Activated T-helper 1 cell treated with anti-CD3 and anti-CD28 coated beads, Interleukin-12 subunit alpha, Interleukin-12 subunit beta, Interleukin-2, Interleukin-4 antibody, amounts not matched to agents 30 ng/mL and 10 ng/mL and 1 ng/mL, durations not matched to agents 14 hours and 24 hours and 36 hours (primary cell): ENCODE measurements at regions of chr5 and their contacts with region 1.

Region 1: GRCh38 chr5:35926389-35927051 is 11.9 kb downstream of the CAPSL start:
- DNase-seq: peak; percentile 57
- H3K4me3 Mint-ChIP-seq: no peak overlapping the region
- H3K27ac Mint-ChIP-seq: no peak overlapping the region
- H3K4me1 Mint-ChIP-seq: peaks cover 38% of the 10 kb centered on the region
- H3K27me3 Mint-ChIP-seq: peaks cover 3% of the 10 kb centered on the region

Region 2: GRCh38 chr5:34957857-34958690 is 968.4 kb before region 1 on chr5:
- intact Hi-C with region 1: loop called (anchors 1 kb)
- DNase-seq: no peak
- H3K4me3 Mint-ChIP-seq: no peak overlapping the region
- H3K27ac Mint-ChIP-seq: no peak overlapping the region
- H3K4me1 Mint-ChIP-seq: peaks cover 27% of the 10 kb centered on the region
- H3K27me3 Mint-ChIP-seq: no peaks in the 10 kb centered on the region

Region 3: DNA sequence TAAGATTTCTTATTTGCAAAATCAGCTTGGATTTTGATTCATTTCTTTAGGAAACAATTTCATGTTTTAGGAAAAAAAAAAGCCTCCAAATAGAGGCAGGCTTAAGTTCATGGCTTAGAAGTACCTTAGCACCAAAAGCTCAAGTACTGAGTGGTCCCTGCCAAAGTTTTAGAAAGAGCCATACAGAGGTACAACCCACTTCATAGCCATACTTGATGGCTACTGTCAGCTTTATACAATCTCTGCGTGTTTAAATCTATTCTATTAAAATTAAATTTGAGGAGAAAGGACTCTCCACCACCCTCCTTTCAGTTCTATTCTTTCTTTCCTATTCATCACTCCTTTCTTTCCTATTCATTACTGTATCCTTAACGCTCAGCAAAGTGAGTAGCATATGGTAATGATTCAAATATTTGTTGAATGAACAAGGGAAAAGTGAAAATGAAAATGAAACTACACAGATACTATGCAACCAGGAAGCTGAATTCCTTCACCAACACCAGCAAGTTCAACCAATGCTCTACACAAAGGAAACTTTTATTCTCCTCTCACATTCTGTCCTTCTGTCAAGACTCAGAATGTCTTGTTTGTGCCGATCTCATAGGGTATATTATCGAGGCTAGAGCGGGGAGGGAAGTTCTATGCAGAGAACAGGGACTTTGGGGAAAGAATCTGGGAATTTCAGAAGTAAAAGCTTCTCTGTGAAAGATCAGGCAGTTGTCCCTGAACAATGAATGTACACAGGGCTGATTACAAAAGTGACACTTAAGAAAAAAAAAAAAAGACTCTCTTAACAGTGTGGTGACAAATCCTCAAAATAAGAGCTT is 447.5 kb before region 1 on chr5:
- intact Hi-C with region 1: loop called (anchors 5 kb)
- DNase-seq: peak; percentile 1
- H3K4me3 Mint-ChIP-seq: peak overlapping the region; percentile 66
- H3K27ac Mint-ChIP-seq: peak overlapping the region; percentile 86
- H3K4me1 Mint-ChIP-seq: peaks cover 12% of the 10 kb centered on the region
- H3K27me3 Mint-ChIP-seq: no peaks in the 10 kb centered on the region

Region 4: GRCh38 chr5:35651002-35651756 is 275.3 kb before region 1 on chr5:
- intact Hi-C with region 1: loop called (anchors 1 kb)
- DNase-seq: peak; percentile 50
- H3K4me3 Mint-ChIP-seq: no peak overlapping the region
- H3K27ac Mint-ChIP-seq: no peak overlapping the region
- H3K4me1 Mint-ChIP-seq: peaks cover 5% of the 10 kb centered on the region
- H3K27me3 Mint-ChIP-seq: no peaks in the 10 kb centered on the region

Region 5: GRCh38 chr5:35799753-35800152 is 126.8 kb before region 1 on chr5:
- intact Hi-C with region 1: no loop called
- DNase-seq: no peak
- H3K4me3 Mint-ChIP-seq: no peak overlapping the region
- H3K27ac Mint-ChIP-seq: no peak overlapping the region
- H3K4me1 Mint-ChIP-seq: peaks cover 70% of the 10 kb centered on the region
- H3K27me3 Mint-ChIP-seq: no peaks in the 10 kb centered on the region

Region 6: GRCh38 chr5:35811108-35811741 is 115.3 kb before region 1 on chr5:
- intact Hi-C with region 1: loop called (anchors 2 kb)
- DNase-seq: no peak
- H3K4me3 Mint-ChIP-seq: peak overlapping the region; percentile 70
- H3K27ac Mint-ChIP-seq: peak overlapping the region; percentile 98
- H3K4me1 Mint-ChIP-seq: peaks cover 56% of the 10 kb centered on the region
- H3K27me3 Mint-ChIP-seq: no peaks in the 10 kb centered on the region

Region 7: DNA sequence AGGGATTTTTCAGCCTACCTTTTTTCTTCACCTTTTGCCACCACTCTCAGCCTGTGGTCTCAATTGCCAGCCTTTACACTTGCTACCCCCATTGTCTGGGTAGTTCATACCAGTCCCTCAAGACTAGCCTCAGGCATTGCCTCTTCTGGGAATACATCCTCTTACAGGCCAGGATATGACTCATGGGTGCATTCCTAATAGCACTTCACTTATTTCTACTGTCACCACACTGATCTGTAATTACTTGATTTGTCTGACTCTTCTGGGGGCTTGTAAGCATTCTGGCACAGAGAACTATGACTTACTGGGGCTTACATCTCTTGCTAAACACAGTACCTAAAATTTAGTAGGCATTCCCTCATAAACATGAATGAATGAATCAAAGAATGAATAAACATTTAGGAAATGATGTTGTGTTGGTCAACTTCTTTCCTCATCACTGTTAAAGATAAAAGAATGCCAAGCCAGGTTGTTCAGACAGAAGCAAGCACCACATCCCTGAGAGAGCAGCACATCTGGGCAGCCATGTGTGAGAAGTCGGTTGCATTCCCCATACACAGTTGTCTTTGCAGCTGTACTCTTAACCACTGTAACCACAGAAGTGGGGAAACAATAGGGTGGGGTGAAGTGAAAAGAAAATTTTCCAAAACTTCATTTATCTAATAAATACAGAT is 42.3 kb before region 1 on chr5:
- intact Hi-C with region 1: loop called (anchors 2 kb)
- DNase-seq: no peak
- H3K4me3 Mint-ChIP-seq: peak overlapping the region; percentile 47
- H3K27ac Mint-ChIP-seq: peak overlapping the region; percentile 88
- H3K4me1 Mint-ChIP-seq: peaks cover 49% of the 10 kb centered on the region
- H3K27me3 Mint-ChIP-seq: peaks cover 2% of the 10 kb centered on the region

Region 8: GRCh38 chr5:35947085-35947484 is 20.6 kb after region 1 on chr5:
- intact Hi-C with region 1: no loop called
- DNase-seq: no peak
- H3K4me3 Mint-ChIP-seq: no peak overlapping the region
- H3K27ac Mint-ChIP-seq: no peak overlapping the region
- H3K4me1 Mint-ChIP-seq: no peaks in the 10 kb centered on the region
- H3K27me3 Mint-ChIP-seq: peaks cover 12% of the 10 kb centered on the region

Region 9: DNA sequence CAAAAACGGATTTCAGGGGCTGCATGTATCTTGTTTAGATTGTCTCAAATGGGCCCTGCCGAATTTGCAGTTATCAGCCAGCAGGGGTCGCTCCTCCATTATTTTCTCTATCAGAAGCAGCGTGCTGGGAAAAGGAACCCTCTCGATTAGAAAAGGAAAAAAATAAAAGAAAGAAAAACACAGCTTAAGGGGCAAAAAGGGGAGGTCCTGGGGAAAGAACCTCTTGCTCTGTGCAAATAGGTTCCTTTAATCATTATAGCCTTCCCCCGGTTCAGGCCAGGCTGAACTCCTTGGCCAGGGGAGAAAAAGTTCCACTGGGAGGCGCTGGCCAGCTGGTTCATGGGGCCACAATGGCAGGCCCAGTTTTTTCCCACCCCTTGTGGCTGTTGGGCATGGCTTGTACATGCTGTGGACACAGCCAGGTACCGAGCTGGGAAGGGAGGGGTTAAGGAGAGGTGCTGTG is 36.9 kb after region 1 on chr5:
- intact Hi-C with region 1: no loop called
- DNase-seq: no peak
- H3K4me3 Mint-ChIP-seq: no peak overlapping the region
- H3K27ac Mint-ChIP-seq: no peak overlapping the region
- H3K4me1 Mint-ChIP-seq: no peaks in the 10 kb centered on the region
- H3K27me3 Mint-ChIP-seq: peaks cover 6% of the 10 kb centered on the region